Right ventricle myocardium inferior (tissue), 1 donor: ENCODE measurements at regions of chr1 and their contacts with region 1.

Region 1: GRCh38 chr1:98688110-98688739 is 26.7 kb downstream of the SNX7 start:
- DNase-seq: no peak
- ATAC-seq: no peak

Region 2: DNA sequence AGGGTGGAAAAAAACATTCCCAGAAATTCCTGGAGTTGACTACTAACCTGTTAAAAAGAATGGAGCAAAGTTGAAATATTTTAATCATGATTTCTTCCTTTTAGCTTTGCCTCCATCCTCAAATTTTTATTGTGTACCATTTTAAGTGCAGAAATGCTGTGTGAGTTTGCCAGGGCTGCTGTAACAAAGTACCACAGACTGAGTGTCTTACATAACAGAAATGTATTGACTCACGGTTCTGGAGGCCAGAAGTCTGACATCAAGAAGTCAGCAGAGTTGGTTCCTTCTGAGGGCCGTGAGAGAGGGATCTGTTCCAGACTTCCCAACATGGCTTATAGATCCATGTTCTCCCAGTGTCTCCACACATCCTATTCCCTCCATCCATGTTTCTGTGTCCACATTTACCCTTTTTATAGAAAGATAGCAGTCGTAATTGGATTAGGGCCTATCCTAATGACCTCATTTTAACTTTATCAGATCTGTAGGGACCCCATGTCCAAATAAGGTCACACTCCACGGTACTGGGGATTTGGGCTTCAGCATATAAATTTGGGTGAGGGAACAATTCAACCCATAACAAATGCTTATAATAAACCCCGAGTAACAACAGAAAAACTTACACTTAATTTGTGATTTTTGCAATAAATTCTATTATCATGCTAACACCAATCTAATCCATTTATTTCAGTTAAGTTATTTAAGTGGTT is 14.0 kb before region 1 on chr1:
- intact Hi-C with region 1: loop called (anchors 1 kb)
- DNase-seq: no peak
- ATAC-seq: no peak